MCF 10A (cell line): ENCODE measurements at regions of chr9 and their contacts with region 1.

Region 1: DNA sequence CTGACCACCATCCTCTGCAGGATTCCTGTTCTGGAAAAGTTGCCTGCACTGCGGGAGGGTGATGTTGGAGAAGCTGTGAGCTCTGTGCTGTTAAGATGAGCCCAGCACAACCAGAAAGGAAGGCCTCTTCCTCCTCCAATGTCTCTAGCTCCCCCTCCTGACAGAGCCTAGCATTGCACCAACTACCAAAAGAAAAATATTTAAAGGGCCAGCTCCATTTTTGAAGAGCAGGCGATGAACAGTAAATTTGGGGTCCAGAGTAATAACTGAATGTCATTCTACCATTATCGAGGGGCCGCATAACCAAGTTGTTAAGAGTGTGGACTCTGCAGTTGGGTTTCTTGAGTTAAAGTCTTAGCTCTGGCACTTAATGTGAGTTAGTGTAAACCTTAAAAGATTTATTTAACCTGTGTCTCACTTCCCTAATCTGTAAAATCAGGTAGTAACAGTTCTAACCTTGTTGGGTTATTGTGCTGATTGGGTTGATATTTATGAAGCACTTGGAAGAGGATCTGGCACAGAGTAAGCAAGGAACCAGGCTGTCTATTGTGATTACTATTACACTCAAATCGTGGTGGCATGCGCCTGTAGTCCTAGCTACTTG is 3.9 kb downstream of the TEX53 start:
- DNase-seq: peak; percentile 79
- H3K4me3 Mint-ChIP-seq: no peak overlapping the region
- H3K27ac Mint-ChIP-seq: no peak overlapping the region
- H3K4me1 Mint-ChIP-seq: no peaks in the 10 kb centered on the region
- H3K27me3 Mint-ChIP-seq: no peaks in the 10 kb centered on the region
- CTCF ChIP-seq: peak; percentile 83

Region 2: DNA sequence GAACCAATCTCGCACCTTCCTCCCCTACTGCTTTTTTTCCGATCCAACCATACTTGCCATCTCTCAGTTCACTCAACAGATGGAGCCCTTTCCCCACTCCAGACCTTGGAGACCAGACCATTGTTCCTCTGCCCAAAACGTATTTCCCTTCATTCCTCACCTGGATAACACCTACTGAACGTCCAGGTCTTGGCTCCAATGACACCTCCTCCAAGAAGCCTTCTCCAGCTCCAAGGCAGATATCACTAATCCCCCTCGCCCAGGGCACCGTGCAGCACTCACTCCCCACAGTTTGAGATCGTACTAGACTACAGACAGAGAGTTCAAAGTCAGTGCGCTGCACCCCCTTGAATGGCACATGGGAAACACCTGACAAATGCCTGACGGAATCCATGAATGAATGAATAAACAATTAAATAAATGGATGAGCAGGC is 218.8 kb before region 1 on chr9:
- CTCF ChIA-PET with region 1: interaction called, 158 read pairs
- POLR2A ChIA-PET with region 1: interaction called, 6 read pairs
- intact Hi-C with region 1: loop called (anchors 1 kb)
- DNase-seq: peak; percentile 61
- H3K4me3 Mint-ChIP-seq: no peak overlapping the region
- H3K27ac Mint-ChIP-seq: no peak overlapping the region
- H3K4me1 Mint-ChIP-seq: no peaks in the 10 kb centered on the region
- H3K27me3 Mint-ChIP-seq: no peaks in the 10 kb centered on the region
- CTCF ChIP-seq: peak; percentile 79

Region 3: DNA sequence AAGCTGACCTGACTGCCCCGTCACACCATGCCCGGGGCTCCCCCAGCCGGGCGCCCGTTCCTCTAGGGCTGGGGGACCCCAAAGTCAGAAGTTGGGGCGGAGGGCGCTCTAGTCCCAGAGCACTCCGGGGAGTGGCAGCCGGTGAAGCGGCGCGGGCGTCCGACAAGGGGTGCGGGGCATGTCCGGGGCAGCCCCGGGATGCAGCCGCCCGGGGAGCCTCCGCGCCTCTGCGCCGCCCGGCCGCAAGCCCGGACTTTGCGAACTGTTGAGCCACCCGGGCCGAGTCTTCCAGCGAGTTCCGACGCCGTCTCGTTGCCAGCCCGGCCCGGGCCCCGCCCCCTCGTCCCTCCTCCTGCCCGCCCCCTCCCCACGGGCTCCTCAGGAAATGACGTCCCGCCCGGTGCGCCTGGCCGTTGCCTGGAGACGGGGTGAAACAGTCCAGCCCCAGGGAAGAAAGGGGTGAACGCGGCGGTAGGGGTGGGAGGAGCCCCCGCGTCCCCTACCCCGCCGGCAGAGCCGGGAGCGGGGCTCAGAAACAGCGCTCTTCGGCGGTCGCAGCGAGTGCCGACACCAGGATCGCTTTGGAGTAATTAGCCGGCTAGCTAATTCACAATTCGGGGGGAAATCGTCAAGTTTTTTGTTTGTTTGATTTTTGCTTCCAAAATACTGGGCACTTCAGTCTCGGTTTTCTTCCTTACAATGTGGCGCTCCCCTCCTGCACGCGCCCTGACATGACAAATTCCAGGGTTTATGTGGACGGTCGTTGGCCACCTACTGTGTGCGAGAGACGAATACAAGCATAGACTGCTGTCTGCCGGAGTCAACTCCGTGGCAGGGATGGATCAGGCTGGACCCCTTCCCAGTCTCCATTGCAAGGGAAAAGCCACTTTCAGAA is 148.2 kb before region 1 on chr9 and contains the start of gene WHRN:
- CTCF ChIA-PET with region 1: interaction called, 27 read pairs
- POLR2A ChIA-PET with region 1: no interaction called
- intact Hi-C with region 1: loop called (anchors 1 kb)
- DNase-seq: peak; percentile 86
- H3K4me3 Mint-ChIP-seq: peak within 1 kb of the TSS; percentile 85
- H3K27ac Mint-ChIP-seq: peak within 1 kb of the TSS; percentile 94
- H3K4me1 Mint-ChIP-seq: peaks cover 27% of the 10 kb centered on the region
- H3K27me3 Mint-ChIP-seq: peaks cover 29% of the 10 kb centered on the region
- CTCF ChIP-seq: no peak
- total RNA-seq, gene WHRN: 9.4 and 12.8 TPM in 2 replicates

Region 4: GRCh38 chr9:114538241-114538640 is 115.4 kb before region 1 on chr9:
- CTCF ChIA-PET with region 1: interaction called, 45 read pairs
- POLR2A ChIA-PET with region 1: interaction called, 4 read pairs
- intact Hi-C with region 1: loop called (anchors 1 kb)
- DNase-seq: peak; percentile 34
- H3K4me3 Mint-ChIP-seq: no peak overlapping the region
- H3K27ac Mint-ChIP-seq: no peak overlapping the region
- H3K4me1 Mint-ChIP-seq: no peaks in the 10 kb centered on the region
- H3K27me3 Mint-ChIP-seq: no peaks in the 10 kb centered on the region
- CTCF ChIP-seq: no peak

Region 5: DNA sequence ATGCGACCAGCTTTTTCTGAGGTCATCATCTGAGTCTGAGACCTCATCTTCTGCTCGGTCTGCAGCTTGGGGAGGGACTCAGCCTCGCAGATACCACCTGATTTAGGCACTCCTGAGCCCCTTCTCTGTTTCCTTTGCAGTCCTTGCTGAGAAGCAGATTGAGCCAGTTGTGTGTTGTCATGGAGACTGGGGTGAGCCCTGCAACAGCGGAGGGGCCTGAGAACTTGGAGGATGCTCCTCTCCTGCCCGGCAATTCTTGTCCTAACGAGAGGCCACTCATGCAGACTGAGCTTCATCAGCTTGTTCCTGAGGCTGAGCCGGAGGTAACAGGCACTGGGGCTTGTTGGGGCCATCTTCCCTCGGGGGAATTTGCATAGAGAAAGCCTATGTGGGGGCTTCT is 15.3 kb before region 1 on chr9:
- CTCF ChIA-PET with region 1: interaction called, 25 read pairs
- POLR2A ChIA-PET with region 1: interaction called, 3 read pairs
- intact Hi-C with region 1: no loop called
- DNase-seq: no peak
- H3K4me3 Mint-ChIP-seq: no peak overlapping the region
- H3K27ac Mint-ChIP-seq: no peak overlapping the region
- H3K4me1 Mint-ChIP-seq: no peaks in the 10 kb centered on the region
- H3K27me3 Mint-ChIP-seq: no peaks in the 10 kb centered on the region
- CTCF ChIP-seq: no peak

Region 6: GRCh38 chr9:115198001-115198400 is 544.3 kb after region 1 on chr9:
- CTCF ChIA-PET with region 1: no interaction called
- POLR2A ChIA-PET with region 1: no interaction called
- intact Hi-C with region 1: no loop called
- DNase-seq: peak; percentile 43
- H3K4me3 Mint-ChIP-seq: no peak overlapping the region
- H3K27ac Mint-ChIP-seq: no peak overlapping the region
- H3K4me1 Mint-ChIP-seq: peaks cover 14% of the 10 kb centered on the region
- H3K27me3 Mint-ChIP-seq: no peaks in the 10 kb centered on the region
- CTCF ChIP-seq: no peak